AG04449 (cell line): ENCODE measurements at regions of chr6 and their contacts with region 1.

Region 1: DNA sequence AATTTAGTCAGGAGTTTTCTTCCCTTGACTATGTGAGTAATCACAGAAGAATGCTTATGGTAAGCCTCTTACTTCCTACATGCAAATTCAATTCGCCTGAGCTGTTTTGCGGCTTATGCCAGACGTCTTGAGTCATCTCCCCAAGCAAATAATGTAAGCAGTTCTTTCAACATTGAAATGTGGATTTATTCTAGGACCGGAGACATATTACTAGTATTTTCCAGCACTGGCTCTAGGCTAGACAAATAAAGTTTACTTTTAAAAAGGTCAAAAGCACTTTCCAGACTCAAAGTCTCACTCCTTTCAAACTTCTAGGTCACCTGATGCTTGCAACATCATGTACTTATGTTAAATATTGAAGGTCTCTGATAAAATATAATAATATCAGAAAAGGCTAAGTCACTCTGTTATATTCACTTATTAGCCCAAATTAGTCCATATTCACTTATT is 38.1 kb upstream of the NOX3 start:
- DNase-seq: peak; percentile 99
- H3K4me3 ChIP-seq: no peak overlapping the region
- CTCF ChIP-seq: no peak

Region 2: GRCh38 chr6:155327326-155328073 is 166.2 kb before region 1 on chr6:
- CTCF ChIA-PET with region 1: interaction called, 87 read pairs
- POLR2A ChIA-PET with region 1: no interaction called
- DNase-seq: peak; percentile 36
- H3K4me3 ChIP-seq: no peak overlapping the region
- CTCF ChIP-seq: peak; percentile 61

Region 3: GRCh38 chr6:155333414-155333813 is 160.3 kb before region 1 on chr6:
- CTCF ChIA-PET with region 1: interaction called, 87 read pairs
- POLR2A ChIA-PET with region 1: no interaction called
- DNase-seq: no peak
- H3K4me3 ChIP-seq: no peak overlapping the region
- CTCF ChIP-seq: no peak

Region 4: DNA sequence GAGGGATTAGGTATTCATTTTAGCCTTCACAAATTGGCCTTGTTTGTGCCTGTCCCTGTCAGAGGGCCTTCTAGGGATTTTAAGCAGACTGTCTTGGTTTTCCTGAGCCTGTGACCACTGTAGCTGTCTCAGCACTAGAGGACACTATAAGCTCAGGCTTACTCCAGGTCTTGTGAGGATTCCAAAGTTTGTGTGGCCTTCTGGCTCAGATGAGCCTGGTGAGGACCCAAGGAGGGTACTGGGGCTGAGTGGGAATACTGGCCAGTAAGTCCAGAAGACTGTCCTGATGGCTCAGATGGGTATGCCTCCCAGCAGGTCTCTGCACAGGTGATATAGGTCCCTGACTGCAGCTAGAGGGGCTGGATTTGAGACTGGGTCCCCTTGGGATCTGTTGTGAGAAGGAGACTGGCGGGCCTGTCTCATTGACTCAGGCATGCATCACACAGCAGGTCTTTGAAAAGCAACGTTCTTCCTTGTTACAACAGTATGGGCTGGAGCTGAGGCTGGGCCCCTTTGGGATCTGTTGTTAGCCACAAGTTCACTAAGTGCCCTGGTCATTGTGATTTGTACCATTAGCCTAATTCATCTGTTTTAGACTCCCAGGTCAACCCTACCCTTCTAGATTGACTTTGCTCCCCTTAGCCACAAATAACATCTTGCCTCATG is 153.1 kb before region 1 on chr6:
- CTCF ChIA-PET with region 1: interaction called, 73 read pairs
- POLR2A ChIA-PET with region 1: interaction called, 7 read pairs
- DNase-seq: no peak
- H3K4me3 ChIP-seq: no peak overlapping the region
- CTCF ChIP-seq: peak; percentile 66

Region 5: DNA sequence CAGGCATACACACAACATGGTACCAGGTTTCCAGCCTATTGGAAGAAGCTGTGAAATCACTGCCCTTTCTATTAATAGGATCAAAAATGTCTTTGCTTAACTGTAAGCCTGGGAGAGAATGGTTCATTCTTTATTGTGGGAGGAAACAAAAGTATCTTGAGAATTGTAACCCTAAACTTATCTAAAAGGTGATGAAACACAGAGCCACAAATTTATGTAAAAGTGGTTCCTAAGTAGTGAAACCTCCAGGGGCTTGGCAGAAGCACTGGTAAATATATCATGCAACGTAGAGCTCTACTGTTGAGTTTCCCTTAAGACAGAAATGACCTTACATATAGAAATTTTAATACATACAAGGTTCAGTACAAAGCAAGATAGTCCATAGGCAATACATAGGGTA is 20.8 kb before region 1 on chr6:
- CTCF ChIA-PET with region 1: no interaction called
- POLR2A ChIA-PET with region 1: no interaction called
- DNase-seq: peak; percentile 51
- H3K4me3 ChIP-seq: no peak overlapping the region
- CTCF ChIP-seq: no peak

Region 6: GRCh38 chr6:155505608-155505989 is 11.9 kb after region 1 on chr6:
- CTCF ChIA-PET with region 1: interaction called, 17 read pairs
- POLR2A ChIA-PET with region 1: no interaction called
- DNase-seq: no peak
- H3K4me3 ChIP-seq: no peak overlapping the region
- CTCF ChIP-seq: no peak

Region 7: GRCh38 chr6:155530219-155530834 is 36.6 kb after region 1 on chr6:
- CTCF ChIA-PET with region 1: interaction called, 10 read pairs
- POLR2A ChIA-PET with region 1: interaction called, 4 read pairs
- DNase-seq: no peak
- H3K4me3 ChIP-seq: no peak overlapping the region
- CTCF ChIP-seq: peak; percentile 58